SK-N-SH (cell line): ENCODE measurements at regions of chr15 and their contacts with region 1.

Region 1: DNA sequence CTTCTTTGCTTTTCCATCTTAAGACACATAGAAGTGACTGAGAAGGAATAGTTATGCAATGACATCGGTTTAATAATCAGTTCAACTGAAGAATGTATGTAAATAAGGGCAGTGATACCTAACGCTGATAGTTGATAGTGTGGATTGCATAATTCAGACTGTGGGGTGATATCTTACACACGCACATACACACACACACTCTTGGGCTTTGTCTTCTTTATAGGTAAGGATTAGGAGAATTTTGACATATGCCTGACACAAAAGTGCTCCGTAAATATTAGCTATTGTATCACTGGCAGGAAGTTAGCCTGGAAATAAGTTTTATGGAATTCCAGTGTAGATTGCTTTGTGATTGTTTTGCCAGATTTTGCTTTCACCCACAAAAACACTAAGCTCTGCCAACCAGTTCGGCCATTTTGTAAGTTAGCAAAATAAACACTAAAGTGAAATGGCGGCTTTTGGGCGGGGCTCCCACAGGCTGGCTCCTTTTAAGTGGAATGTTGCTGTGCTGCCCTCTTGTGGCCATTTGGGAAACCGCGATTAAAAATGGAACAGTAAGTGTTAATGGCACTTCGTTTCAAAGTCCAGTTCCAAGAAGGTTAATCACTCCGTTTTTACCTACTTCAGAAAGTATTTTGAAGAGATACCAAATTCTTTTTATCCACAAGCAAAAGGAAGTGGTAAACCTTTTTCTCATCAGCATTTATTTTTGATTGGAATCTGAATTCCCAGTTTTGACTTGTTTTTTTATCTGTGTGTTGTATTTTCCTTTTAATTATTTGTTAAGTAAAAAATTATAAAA is 17.7 kb downstream of the CHD2 start:
- DNase-seq: peak; percentile 76
- H3K4me3 ChIP-seq: no peak overlapping the region; a peak in 1 of 4 replicates
- H3K27ac ChIP-seq: peak overlapping the region; percentile 88 to 90
- H3K4me1 ChIP-seq: peaks cover 9 to 41% of the 10 kb centered on the region in 2 experiments
- H3K27me3 ChIP-seq: no peaks in the 10 kb centered on the region
- CTCF ChIP-seq: peak; percentile 94
- EP300 ChIP-seq: 0 out of 4 replicates have a peak, but pooled peaks of 1 of the 2 experiments have one; percentile 1
- RAD21 ChIP-seq: peak; percentile 84

Region 2: GRCh38 chr15:92751524-92751923 is 166.3 kb before region 1 on chr15:
- CTCF ChIA-PET with region 1: no interaction called
- POLR2A ChIA-PET with region 1: no interaction called
- DNase-seq: no peak
- H3K4me3 ChIP-seq: no peak overlapping the region
- H3K27ac ChIP-seq: no peak overlapping the region
- H3K4me1 ChIP-seq: no peaks in the 10 kb centered on the region; a peak in 1 of 4 replicates
- H3K27me3 ChIP-seq: no peaks in the 10 kb centered on the region
- CTCF ChIP-seq: no peak
- EP300 ChIP-seq: no peak
- RAD21 ChIP-seq: no peak

Region 3: DNA sequence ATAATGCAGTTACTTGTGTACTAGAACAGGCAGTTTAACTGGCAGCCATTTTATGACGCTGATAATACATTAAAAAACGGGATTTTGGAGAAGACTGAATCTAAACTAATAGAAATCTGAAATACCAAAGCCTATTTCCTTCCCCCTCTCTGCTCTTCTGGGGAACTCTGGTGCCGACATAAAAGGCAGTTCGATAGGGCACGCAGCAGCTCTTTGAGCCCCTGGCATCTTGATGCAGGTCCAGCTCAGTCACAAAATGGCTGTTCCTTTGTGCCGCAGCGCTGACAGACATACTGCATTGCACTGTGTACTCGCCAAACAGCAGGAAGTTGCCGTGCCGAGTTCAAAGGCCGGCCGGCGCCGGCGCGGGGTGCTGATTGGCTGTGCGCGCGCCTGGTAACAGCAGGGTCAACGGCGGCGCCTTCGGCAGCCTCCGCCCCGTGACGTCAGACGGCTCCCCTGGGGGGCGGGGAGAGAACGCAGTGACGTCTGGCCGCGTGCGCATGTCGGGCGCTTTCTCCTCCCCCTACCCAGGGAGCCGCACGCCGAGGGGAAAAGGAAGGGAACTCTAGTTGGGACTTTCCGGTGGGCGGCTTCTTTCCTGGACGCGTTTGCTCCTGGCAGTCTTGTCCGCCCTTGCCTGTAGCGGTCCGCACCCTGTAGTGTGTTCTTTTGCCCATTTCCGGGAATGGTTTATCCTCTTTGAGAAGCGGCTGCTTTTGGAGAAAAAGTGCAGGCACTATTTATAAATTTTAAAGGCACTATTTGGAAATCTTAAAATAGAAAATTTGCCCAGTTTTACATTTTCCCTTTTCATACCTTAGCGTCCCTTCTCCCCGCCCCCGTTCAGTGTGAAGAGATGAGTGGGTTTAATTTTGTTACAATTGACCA is 13.6 kb before region 1 on chr15:
- CTCF ChIA-PET with region 1: interaction called, 33 read pairs
- POLR2A ChIA-PET with region 1: interaction called, 3 read pairs
- DNase-seq: peak; percentile 94
- H3K4me3 ChIP-seq: peak overlapping the region; percentile 77 to 86
- H3K27ac ChIP-seq: peak overlapping the region; percentile 99 to 100
- H3K4me1 ChIP-seq: peaks cover 25 to 32% of the 10 kb centered on the region in 2 experiments
- H3K27me3 ChIP-seq: no peaks in the 10 kb centered on the region
- CTCF ChIP-seq: no peak
- EP300 ChIP-seq: peak in 1 of 2 experiments; percentile 73; a peak in 2 of 4 replicates
- RAD21 ChIP-seq: no peak

Region 4: DNA sequence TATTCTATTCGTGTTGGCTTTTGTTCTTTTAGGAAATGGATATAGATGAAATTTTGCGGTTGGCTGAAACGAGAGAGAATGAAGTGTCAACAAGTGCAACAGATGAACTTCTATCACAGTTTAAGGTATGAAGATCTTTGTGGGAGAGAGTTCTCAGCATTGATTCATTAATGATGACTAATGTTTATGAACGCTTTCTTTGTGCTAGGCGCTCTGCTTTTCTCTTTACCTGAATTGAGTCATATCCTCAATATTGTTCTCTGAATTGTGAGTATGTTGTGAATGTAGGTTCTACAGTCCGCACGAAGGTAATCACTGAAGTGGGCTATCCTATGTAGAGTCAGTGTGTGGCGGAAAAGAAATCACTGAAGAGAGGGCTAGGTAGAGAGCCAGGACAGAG is 63.5 kb after region 1 on chr15:
- CTCF ChIA-PET with region 1: no interaction called
- POLR2A ChIA-PET with region 1: no interaction called
- DNase-seq: no peak
- H3K4me3 ChIP-seq: no peak overlapping the region
- H3K27ac ChIP-seq: no peak overlapping the region
- H3K4me1 ChIP-seq: no peaks in the 10 kb centered on the region; a peak in 1 of 4 replicates
- H3K27me3 ChIP-seq: no peaks in the 10 kb centered on the region
- CTCF ChIP-seq: no peak
- EP300 ChIP-seq: no peak
- RAD21 ChIP-seq: no peak